ENCODE measurements at regions of chr9 and their contacts with region 1.

Region 1: DNA sequence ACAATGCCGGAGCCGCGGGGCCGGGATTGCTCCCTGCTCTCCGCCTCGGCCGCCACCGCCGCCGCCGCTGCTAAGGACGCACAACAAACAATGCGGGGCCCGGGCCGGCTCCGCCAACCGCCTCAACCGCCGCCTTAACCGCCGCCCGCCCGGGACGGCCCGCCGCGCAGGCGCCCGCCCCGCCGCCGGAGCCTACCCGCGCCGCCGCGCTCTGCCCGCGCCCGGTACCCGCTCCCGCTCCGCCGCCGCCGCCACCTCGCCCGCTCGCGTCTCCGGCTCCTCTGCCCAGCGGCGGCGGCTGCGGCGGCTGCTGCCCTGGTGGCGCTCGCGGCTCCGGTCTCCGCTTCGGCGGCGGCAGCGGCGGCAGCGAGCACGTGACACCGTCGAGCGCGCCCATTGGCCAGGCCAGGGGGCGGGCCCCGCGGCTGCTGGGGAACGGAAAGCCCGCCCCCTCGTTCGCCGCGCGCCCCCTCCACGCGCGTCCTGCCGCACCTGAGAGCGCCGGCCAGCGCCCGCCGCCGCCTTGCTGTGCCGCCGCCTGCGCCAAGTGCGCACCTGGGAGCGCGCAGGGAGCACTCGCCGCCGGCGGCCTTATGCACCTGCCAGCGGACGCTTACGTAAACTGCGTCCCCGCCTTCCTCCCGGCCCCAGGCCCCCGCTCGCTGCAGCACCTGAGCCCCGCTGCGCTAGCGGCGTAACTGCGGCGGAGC is at the start of gene STRBP:
- DNase-seq: peak; percentile 85 to 98 (median 94)
- ATAC-seq: peak; percentile 88
- H3K4me3 ChIP-seq: peak within 1 kb of the TSS; percentile 76
- H3K4me3 Mint-ChIP-seq: peak within 1 kb of the TSS; percentile 89
- H3K27ac ChIP-seq: peak within 1 kb of the TSS; percentile 62 to 84
- H3K27ac Mint-ChIP-seq: peak within 1 kb of the TSS; percentile 73
- H3K4me1 ChIP-seq: peaks cover 30% of the 10 kb centered on the region
- H3K4me1 Mint-ChIP-seq: peaks cover 35% of the 10 kb centered on the region
- H3K27me3 ChIP-seq: no peaks in the 10 kb centered on the region
- H3K27me3 Mint-ChIP-seq: no peaks in the 10 kb centered on the region
- CTCF ChIP-seq: no peak
- total RNA-seq, gene STRBP: 10.9 to 12.0 TPM

Region 2: DNA sequence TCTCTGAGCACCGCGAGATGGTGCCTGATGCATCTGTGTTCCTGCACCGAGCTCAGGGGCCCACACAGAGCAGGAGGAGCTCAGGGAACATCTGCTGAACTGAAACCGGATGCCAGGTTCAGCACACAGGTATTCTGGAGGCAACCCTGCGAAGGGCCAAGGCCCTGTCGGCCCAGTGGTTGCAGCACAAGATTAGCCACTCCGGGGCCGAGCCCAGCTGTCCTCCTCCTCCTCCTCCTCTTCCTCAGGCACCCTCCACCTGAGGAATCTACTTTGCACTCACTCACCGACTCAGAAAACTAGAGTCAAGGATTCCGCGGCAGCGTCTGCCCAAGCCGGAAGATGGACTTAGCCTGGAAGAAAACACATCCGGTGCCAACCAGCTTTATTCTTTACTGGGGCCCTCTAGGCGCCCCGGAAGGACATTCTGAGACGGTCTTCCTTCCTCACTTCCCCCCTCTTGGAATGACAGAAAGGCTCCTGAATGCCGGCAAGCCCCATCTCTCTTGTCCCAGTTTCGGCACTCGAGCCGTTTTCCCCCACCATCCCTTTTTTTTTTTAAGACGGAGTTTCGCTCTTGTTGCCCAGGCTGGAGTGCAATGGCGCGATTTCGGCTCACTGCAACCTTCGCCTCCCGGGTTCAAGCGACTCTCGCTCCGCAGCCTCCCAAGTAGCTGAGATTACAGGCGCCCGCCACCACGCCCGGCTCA is 355.3 kb before region 1 on chr9 and contains the start of gene ZBTB6:
- CTCF ChIA-PET with region 1: no interaction called
- POLR2A ChIA-PET with region 1: no interaction called
- intact Hi-C with region 1: loop called in 1 of 2 experiments (anchors 10 kb)
- DNase-seq: peak; percentile 52 to 89 (median 64)
- ATAC-seq: peak; percentile 98
- H3K4me3 ChIP-seq: peak within 1 kb of the TSS; percentile 78
- H3K4me3 Mint-ChIP-seq: peak within 1 kb of the TSS; percentile 96
- H3K27ac ChIP-seq: peak within 1 kb of the TSS; percentile 86 to 88
- H3K27ac Mint-ChIP-seq: peak within 1 kb of the TSS; percentile 88
- H3K4me1 ChIP-seq: peaks cover 11% of the 10 kb centered on the region
- H3K4me1 Mint-ChIP-seq: peaks cover 29% of the 10 kb centered on the region
- H3K27me3 ChIP-seq: no peaks in the 10 kb centered on the region
- H3K27me3 Mint-ChIP-seq: no peaks in the 10 kb centered on the region
- CTCF ChIP-seq: no peak
- total RNA-seq, gene ZBTB6: 3.6 to 3.9 TPM

Region 3: DNA sequence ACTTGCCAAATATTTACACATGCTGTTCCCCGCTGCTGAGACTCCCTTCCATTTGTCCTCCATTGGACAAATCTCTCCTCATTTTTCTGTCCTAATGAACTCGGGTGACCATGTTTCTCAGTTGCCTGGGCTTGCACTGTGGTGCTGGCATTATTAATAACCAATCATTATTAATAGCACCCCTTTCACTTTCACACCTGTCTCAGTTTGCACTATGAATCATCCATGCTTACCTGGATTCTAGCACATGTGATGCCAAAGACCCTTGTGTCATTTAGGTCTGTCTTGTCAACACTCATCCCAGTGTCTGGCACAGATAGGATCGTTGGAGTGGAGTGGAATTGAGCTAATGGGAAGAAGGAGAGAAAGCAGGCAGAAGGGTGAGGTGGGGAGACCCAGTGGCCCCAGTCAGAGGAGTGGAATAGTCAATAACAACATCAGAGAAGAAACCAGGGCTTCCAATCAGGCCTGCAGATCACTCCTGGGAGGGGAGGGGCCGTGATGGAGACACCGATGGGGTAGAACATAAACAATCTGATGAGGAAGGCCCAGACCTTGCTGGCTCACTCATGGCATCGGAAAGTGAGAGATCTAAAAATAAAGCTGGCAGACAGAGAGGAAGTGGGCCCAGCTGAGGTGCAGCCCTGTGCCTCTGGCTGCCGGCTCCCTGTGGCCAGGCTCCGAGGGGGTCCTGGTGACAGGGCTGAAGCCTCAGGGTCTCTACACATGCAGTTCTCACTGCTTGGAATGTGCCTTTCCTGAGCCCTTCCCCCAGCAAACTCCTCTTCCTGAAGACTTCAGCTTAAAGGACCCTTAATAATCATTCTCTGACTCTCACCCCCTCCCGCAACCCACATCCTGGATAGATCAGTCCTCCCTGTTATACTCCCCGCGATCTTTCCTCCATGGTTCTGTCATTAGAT is 54.1 kb after region 1 on chr9:
- CTCF ChIA-PET with region 1: no interaction called
- POLR2A ChIA-PET with region 1: interaction called, 7 read pairs
- intact Hi-C with region 1: loop called (anchors 1 to 5 kb)
- DNase-seq: peak; percentile 36 to 82 (median 63)
- ATAC-seq: peak; percentile 85
- H3K4me3 ChIP-seq: peak overlapping the region; percentile 33
- H3K4me3 Mint-ChIP-seq: peak overlapping the region; percentile 38
- H3K27ac ChIP-seq: peak overlapping the region; percentile 66 to 73
- H3K27ac Mint-ChIP-seq: peak overlapping the region; percentile 97
- H3K4me1 ChIP-seq: peaks cover 32% of the 10 kb centered on the region
- H3K4me1 Mint-ChIP-seq: peaks cover 45% of the 10 kb centered on the region
- H3K27me3 ChIP-seq: no peaks in the 10 kb centered on the region
- H3K27me3 Mint-ChIP-seq: no peaks in the 10 kb centered on the region
- CTCF ChIP-seq: no peak

Region 4: DNA sequence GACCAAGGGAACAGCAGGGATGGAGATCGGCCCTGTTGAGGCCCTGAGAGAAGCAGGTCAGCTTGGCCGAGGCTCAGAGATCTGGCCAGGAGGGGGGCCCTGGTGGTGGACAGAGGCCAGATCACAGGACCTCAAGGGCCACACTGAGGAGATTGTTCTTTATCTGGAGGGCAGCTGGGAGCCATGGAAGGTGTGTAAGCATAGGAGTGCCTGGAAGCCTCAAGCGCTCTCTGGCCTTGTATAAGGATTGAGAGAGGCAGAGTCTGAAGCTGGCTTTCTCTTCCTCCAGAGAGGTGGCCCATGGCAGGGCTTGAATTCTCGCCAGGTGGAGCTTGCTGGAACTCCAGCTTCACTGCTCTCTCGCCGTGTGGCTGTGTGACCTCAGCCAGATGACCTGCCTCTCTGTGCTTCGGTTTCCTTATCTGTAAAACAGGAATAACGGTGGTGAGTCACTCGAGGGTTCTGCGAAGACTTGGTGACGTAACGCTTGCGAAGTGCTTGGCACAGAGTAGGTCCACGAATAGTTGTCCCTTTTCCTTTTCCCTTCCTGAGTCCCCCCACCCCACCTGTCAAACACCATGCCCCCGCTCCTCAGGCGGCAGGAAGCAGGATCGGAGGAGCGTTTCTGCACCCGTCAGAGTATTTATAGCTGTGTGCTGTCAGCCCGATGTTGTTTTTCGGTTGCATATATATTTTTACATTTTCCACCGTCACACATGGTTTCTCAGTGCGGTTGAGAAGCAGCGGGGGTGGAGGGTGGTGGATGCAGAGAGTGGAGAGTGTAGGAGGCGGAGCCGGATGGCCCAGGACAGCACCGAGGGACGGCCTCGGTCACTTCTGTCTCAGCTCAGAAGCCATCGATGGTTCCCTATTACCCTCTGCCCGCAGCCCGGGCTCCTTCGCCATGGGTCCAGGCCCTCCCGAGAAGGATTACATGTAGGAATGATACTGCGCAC is 70.6 kb after region 1 on chr9:
- CTCF ChIA-PET with region 1: no interaction called
- POLR2A ChIA-PET with region 1: interaction called, 12 read pairs
- intact Hi-C with region 1: loop called (anchors 5 kb)
- DNase-seq: peak; percentile 8 to 75 (median 32)
- ATAC-seq: peak; percentile 73
- H3K4me3 ChIP-seq: peak overlapping the region; percentile 69
- H3K4me3 Mint-ChIP-seq: peak overlapping the region; percentile 89
- H3K27ac ChIP-seq: peak overlapping the region; percentile 18 to 35
- H3K27ac Mint-ChIP-seq: peak overlapping the region; percentile 85
- H3K4me1 ChIP-seq: peaks cover 29% of the 10 kb centered on the region
- H3K4me1 Mint-ChIP-seq: peaks cover 36% of the 10 kb centered on the region
- H3K27me3 ChIP-seq: no peaks in the 10 kb centered on the region
- H3K27me3 Mint-ChIP-seq: no peaks in the 10 kb centered on the region
- CTCF ChIP-seq: no peak

Region 5: GRCh38 chr9:123929870-123930831 is 661.8 kb after region 1 on chr9 and contains the start of gene DENND1A:
- CTCF ChIA-PET with region 1: no interaction called
- POLR2A ChIA-PET with region 1: no interaction called
- intact Hi-C with region 1: loop called in 1 of 2 experiments (anchors 5 kb)
- DNase-seq: peak; percentile 76 to 94 (median 85)
- ATAC-seq: peak; percentile 91
- H3K4me3 ChIP-seq: peak within 1 kb of the TSS; percentile 77
- H3K4me3 Mint-ChIP-seq: peak within 1 kb of the TSS; percentile 99
- H3K27ac ChIP-seq: peak within 1 kb of the TSS in 1 of 2 donors; percentile 34
- H3K27ac Mint-ChIP-seq: peak within 1 kb of the TSS; percentile 80
- H3K4me1 ChIP-seq: peaks cover 21% of the 10 kb centered on the region
- H3K4me1 Mint-ChIP-seq: peaks cover 36% of the 10 kb centered on the region
- H3K27me3 ChIP-seq: no peaks in the 10 kb centered on the region
- H3K27me3 Mint-ChIP-seq: no peaks in the 10 kb centered on the region
- CTCF ChIP-seq: no peak
- total RNA-seq, gene DENND1A: 20.0 to 20.6 TPM

Measured in CD4-positive, alpha-beta T cell (primary cell).